ENCODE measurements at regions of chr3 and their contacts with region 1.

Region 1: GRCh38 chr3:98732286-98733052 is 30.7 kb upstream of the ST3GAL6 start:
- DNase-seq: no peak
- ATAC-seq: peak; percentile 52
- H3K4me3 ChIP-seq: peak overlapping the region; percentile 80
- H3K27ac ChIP-seq: peak overlapping the region; percentile 60
- H3K4me1 ChIP-seq: no peaks in the 10 kb centered on the region
- H3K27me3 ChIP-seq: no peaks in the 10 kb centered on the region
- CTCF ChIP-seq: no peak
- EP300 ChIP-seq: no peak
- POLR2A ChIP-seq: peak; percentile 81
- RAD21 ChIP-seq: no peak

Region 2: GRCh38 chr3:98531622-98532274 is 200.7 kb before region 1 on chr3 and contains the start of gene GPR15:
- CTCF ChIA-PET with region 1: interaction called, 3 read pairs
- POLR2A ChIA-PET with region 1: interaction called, 3 read pairs
- RAD21 ChIA-PET with region 1: no interaction called
- SMC1A ChIA-PET with region 1: no interaction called
- in situ Hi-C with region 1: no loop called
- intact Hi-C with region 1: loop called (anchors 5 kb)
- DNase-seq: no peak
- ATAC-seq: peak; percentile 44
- H3K4me3 ChIP-seq: peak within 1 kb of the TSS; percentile 81
- H3K27ac ChIP-seq: peak within 1 kb of the TSS; percentile 97
- H3K4me1 ChIP-seq: peaks cover 3% of the 10 kb centered on the region; the same call in 1 of the 2 replicates
- H3K27me3 ChIP-seq: no peaks in the 10 kb centered on the region
- CTCF ChIP-seq: no peak
- EP300 ChIP-seq: no peak; a peak in 1 of 4 replicates
- POLR2A ChIP-seq: no peak
- RAD21 ChIP-seq: no peak
- polyA plus RNA-seq, gene GPR15: 70.7 to 145 TPM

Region 3: DNA sequence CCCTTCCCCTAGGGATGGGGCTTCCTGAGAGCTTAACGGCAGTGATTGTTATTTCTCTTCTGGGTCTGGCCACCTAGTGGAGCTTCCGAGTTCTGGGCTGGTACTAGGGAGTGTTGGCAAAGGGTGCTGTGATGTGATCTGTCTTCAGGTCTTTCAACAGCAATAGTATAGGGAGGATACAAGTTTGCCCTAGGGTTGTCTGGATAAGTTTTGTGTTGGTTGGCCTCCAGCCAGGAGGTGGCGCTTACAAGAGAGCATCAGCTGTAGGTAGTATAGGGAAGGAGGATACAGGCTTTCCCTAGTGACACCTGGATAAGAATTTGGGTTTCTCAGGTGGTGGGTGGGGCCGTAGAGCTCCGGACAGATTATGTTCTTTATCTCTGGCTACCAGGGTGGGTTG is 119.9 kb before region 1 on chr3:
- CTCF ChIA-PET with region 1: interaction called, 7 read pairs
- POLR2A ChIA-PET with region 1: interaction called, 11 read pairs
- RAD21 ChIA-PET with region 1: interaction called, 48 read pairs
- SMC1A ChIA-PET with region 1: interaction called, 21 read pairs
- in situ Hi-C with region 1: no loop called
- intact Hi-C with region 1: no loop called
- DNase-seq: no peak
- ATAC-seq: peak; percentile 83
- H3K4me3 ChIP-seq: no peak overlapping the region
- H3K27ac ChIP-seq: peak overlapping the region; percentile 80
- H3K4me1 ChIP-seq: peaks cover 7% of the 10 kb centered on the region; the same call in 1 of the 2 replicates
- H3K27me3 ChIP-seq: no peaks in the 10 kb centered on the region
- CTCF ChIP-seq: peak; percentile 16 to 42 (median 39); a peak in 3 of 6 replicates
- EP300 ChIP-seq: no peak
- POLR2A ChIP-seq: no peak
- RAD21 ChIP-seq: peak; percentile 54; the same call in 1 of the 2 replicates

Region 4: GRCh38 chr3:98699136-98699535 is 33.3 kb before region 1 on chr3:
- CTCF ChIA-PET with region 1: no interaction called
- POLR2A ChIA-PET with region 1: no interaction called
- RAD21 ChIA-PET with region 1: no interaction called
- SMC1A ChIA-PET with region 1: no interaction called
- in situ Hi-C with region 1: no loop called
- intact Hi-C with region 1: no loop called
- DNase-seq: no peak
- ATAC-seq: no peak
- H3K4me3 ChIP-seq: no peak overlapping the region
- H3K27ac ChIP-seq: no peak overlapping the region
- H3K4me1 ChIP-seq: no peaks in the 10 kb centered on the region
- H3K27me3 ChIP-seq: no peaks in the 10 kb centered on the region
- CTCF ChIP-seq: no peak
- EP300 ChIP-seq: no peak
- POLR2A ChIP-seq: no peak
- RAD21 ChIP-seq: no peak

Region 5: GRCh38 chr3:98755601-98756000 is 23.1 kb after region 1 on chr3:
- CTCF ChIA-PET with region 1: interaction called, 6 read pairs
- POLR2A ChIA-PET with region 1: interaction called, 8 read pairs
- RAD21 ChIA-PET with region 1: interaction called, 36 read pairs
- SMC1A ChIA-PET with region 1: interaction called, 19 read pairs
- in situ Hi-C with region 1: no loop called
- intact Hi-C with region 1: no loop called
- DNase-seq: no peak
- ATAC-seq: no peak
- H3K4me3 ChIP-seq: no peak overlapping the region
- H3K27ac ChIP-seq: no peak overlapping the region
- H3K4me1 ChIP-seq: no peaks in the 10 kb centered on the region; the same call in 1 of the 2 replicates
- H3K27me3 ChIP-seq: no peaks in the 10 kb centered on the region
- CTCF ChIP-seq: no peak
- EP300 ChIP-seq: no peak
- POLR2A ChIP-seq: no peak
- RAD21 ChIP-seq: no peak

Region 6: DNA sequence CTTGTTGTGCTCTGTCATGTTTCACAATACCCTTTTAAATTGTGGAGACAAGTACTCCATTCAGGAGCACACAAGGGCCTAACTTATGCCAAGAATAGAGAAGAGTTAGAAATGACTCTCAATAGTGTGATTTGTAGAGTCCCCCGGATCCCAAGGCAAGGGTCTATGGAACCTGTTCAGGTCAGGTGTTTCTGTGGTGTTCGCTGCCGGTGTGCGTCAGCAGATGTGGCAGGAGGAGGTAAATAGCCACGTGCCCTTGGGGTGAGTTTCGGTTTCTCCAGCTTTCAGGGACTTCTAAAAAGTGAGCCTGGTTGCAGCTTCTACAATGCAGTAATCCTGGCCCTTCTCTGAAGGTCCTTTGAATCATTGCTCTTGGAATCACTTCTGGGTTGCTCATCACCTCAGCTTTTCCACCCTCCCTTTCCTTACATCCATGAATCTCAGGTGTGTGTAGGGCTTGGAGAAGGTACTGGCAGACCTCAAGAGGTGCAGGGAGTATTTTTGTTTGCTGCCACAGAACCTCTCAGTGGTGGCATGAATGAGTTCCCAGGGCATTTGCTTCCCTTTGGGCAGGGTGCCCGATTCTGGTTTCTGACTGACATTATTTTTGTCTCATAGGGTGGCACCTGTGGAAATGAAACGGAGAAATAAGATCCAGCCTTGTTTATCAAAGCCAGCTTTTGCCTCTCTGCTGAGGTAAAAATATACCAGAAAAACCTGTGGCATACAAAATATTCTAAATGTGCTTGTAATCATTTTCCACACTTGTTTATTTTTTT is 38.0 kb after region 1 on chr3:
- CTCF ChIA-PET with region 1: interaction called, 4 read pairs
- POLR2A ChIA-PET with region 1: interaction called, 5 read pairs
- RAD21 ChIA-PET with region 1: interaction called, 11 read pairs
- SMC1A ChIA-PET with region 1: interaction called, 21 read pairs
- in situ Hi-C with region 1: no loop called
- intact Hi-C with region 1: loop called (anchors 5 kb)
- DNase-seq: peak; percentile 53
- ATAC-seq: peak; percentile 95
- H3K4me3 ChIP-seq: 0 out of 2 replicates have a peak overlapping the region, but pooled peaks have one; percentile 5
- H3K27ac ChIP-seq: peak overlapping the region; percentile 62
- H3K4me1 ChIP-seq: peaks cover 10% of the 10 kb centered on the region
- H3K27me3 ChIP-seq: no peaks in the 10 kb centered on the region
- CTCF ChIP-seq: no peak
- EP300 ChIP-seq: peak; percentile 68 to 79; a peak in 3 of 4 replicates
- POLR2A ChIP-seq: no peak
- RAD21 ChIP-seq: no peak

Region 7: DNA sequence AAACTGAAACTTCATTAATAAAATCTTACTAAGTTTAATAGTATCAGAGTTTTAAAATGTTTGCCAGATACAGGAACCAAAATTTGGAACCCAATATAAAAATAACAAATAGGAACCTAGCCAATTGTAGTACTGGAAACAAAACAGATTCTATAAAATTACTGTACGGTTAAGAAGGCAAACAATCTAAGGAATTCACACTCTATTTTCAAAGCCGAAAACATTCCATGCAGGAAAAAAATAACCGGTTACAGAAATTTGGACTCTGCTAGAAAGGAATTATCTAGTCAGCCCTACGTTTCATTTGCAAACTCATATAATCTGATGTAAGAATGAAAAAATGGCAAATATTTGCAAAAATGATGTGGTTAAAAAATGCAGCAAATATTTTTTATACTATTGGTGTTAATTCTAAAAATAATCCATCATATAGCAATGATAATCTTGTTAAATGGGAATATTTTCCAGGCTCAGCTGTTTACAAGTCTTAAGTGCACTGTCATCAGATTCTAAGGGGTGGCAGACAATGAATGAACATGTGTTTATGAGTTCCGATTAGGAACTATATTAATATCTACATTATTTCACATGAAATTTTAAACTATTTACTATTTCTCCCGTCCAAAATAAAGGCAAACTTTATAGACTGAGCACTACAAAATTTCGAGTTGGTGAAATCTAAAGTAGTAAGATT is 110.9 kb after region 1 on chr3:
- CTCF ChIA-PET with region 1: no interaction called
- POLR2A ChIA-PET with region 1: no interaction called
- RAD21 ChIA-PET with region 1: no interaction called
- SMC1A ChIA-PET with region 1: no interaction called
- in situ Hi-C with region 1: no loop called
- intact Hi-C with region 1: no loop called
- DNase-seq: no peak
- ATAC-seq: no peak
- H3K4me3 ChIP-seq: no peak overlapping the region
- H3K27ac ChIP-seq: no peak overlapping the region
- H3K4me1 ChIP-seq: no peaks in the 10 kb centered on the region
- H3K27me3 ChIP-seq: no peaks in the 10 kb centered on the region
- CTCF ChIP-seq: no peak
- EP300 ChIP-seq: no peak
- POLR2A ChIP-seq: no peak
- RAD21 ChIP-seq: no peak

Region 8: GRCh38 chr3:99134986-99135385 is 402.5 kb after region 1 on chr3:
- CTCF ChIA-PET with region 1: no interaction called
- POLR2A ChIA-PET with region 1: no interaction called
- RAD21 ChIA-PET with region 1: no interaction called
- SMC1A ChIA-PET with region 1: no interaction called
- in situ Hi-C with region 1: no loop called
- intact Hi-C with region 1: no loop called
- DNase-seq: no peak
- ATAC-seq: no peak
- H3K4me3 ChIP-seq: no peak overlapping the region
- H3K27ac ChIP-seq: no peak overlapping the region
- H3K4me1 ChIP-seq: no peaks in the 10 kb centered on the region
- H3K27me3 ChIP-seq: no peaks in the 10 kb centered on the region
- CTCF ChIP-seq: no peak
- EP300 ChIP-seq: no peak
- POLR2A ChIP-seq: no peak
- RAD21 ChIP-seq: no peak

Region 9: DNA sequence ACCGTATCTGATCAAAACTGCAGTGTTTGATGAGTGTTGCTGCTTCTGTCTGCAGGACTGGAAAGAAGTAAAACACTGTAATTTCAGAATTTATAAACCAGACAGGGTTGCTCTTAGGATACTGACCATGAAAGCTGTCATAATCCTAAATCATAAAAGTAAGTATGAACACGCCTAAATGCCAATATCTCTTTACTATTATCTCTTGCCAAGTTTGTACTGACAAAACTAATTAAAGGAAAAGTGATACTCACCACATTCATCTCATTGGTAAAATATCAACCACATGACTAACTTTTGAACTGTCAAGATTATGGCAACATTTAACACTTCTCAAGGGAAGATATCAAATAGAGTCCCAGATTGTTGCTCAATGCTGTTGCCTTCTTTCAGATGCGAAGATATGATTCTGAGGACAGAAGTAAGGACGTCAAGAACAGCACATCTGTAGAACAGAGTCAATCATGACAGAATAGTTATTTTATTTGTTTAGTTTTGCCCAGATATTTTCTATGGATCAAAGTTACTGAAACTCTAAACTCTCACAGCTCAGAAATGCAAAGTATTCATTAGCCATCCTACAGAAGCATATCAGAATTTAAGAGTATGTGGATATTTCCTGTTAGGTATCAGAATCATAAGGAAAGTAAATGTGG is 844.6 kb after region 1 on chr3:
- CTCF ChIA-PET with region 1: no interaction called
- POLR2A ChIA-PET with region 1: no interaction called
- RAD21 ChIA-PET with region 1: no interaction called
- SMC1A ChIA-PET with region 1: no interaction called
- in situ Hi-C with region 1: no loop called
- intact Hi-C with region 1: no loop called
- DNase-seq: no peak
- ATAC-seq: no peak
- H3K4me3 ChIP-seq: no peak overlapping the region
- H3K27ac ChIP-seq: no peak overlapping the region
- H3K4me1 ChIP-seq: no peaks in the 10 kb centered on the region
- H3K27me3 ChIP-seq: no peaks in the 10 kb centered on the region
- CTCF ChIP-seq: no peak
- EP300 ChIP-seq: no peak
- POLR2A ChIP-seq: no peak
- RAD21 ChIP-seq: no peak